ENCODE measurements at regions of chr4 and their contacts with region 1.

Region 1: GRCh38 chr4:163332500-163333406 is at the start of gene NPY1R:
- DNase-seq: peak; percentile 48
- H3K4me3 ChIP-seq: peak within 1 kb of the TSS; percentile 71
- H3K27ac ChIP-seq: peak within 1 kb of the TSS; percentile 32
- H3K4me1 ChIP-seq: peaks cover 21% of the 10 kb centered on the region
- H3K27me3 ChIP-seq: peaks cover 38% of the 10 kb centered on the region
- CTCF ChIP-seq: peak; percentile 77
- total RNA-seq, gene NPY1R: 1.6 TPM

Region 2: DNA sequence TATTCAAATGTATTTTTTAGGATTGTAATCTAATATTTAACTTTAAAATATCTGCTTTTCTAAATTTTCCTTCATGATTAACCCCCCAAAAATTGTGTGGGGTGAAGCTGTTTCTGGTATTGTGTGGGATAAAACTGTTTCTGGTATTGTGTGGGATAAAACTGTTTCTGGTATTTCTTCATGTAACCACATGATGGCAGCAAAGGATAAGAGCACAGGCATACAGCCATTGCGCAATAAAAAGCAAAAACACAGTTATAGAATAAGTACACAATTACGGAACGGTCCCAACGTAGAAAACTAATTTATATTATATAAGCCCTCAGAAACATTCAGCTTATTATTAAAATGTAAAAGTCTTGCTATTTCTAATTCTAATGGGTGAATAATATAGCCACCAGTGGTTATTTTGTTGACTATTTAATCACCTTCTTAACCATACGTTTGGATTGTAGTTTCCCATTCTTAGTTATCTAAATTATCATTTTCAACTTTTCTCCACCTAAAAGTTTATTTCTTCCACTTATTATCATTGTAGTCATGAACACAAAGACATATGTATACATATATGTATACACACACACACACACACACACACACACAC is 835.1 kb before region 1 on chr4:
- intact Hi-C with region 1: loop called (anchors 5 kb)
- DNase-seq: no peak
- H3K4me3 ChIP-seq: peak overlapping the region; percentile 46
- H3K27ac ChIP-seq: peak overlapping the region; percentile 53
- H3K4me1 ChIP-seq: no peaks in the 10 kb centered on the region
- H3K27me3 ChIP-seq: no peaks in the 10 kb centered on the region
- CTCF ChIP-seq: peak; percentile 89

Measured in left ventricle myocardium inferior (tissue), 1 donor.